Lower leg skin (tissue), 4 donors: ENCODE measurements at regions of chr3 and their contacts with region 1.

Region 1: GRCh38 chr3:116135457-116136085 is 309.7 kb downstream of the LSAMP start:
- DNase-seq: no peak
- H3K4me3 ChIP-seq: no peak overlapping the region
- CTCF ChIP-seq: no peak
- POLR2A ChIP-seq: no peak

Region 2: DNA sequence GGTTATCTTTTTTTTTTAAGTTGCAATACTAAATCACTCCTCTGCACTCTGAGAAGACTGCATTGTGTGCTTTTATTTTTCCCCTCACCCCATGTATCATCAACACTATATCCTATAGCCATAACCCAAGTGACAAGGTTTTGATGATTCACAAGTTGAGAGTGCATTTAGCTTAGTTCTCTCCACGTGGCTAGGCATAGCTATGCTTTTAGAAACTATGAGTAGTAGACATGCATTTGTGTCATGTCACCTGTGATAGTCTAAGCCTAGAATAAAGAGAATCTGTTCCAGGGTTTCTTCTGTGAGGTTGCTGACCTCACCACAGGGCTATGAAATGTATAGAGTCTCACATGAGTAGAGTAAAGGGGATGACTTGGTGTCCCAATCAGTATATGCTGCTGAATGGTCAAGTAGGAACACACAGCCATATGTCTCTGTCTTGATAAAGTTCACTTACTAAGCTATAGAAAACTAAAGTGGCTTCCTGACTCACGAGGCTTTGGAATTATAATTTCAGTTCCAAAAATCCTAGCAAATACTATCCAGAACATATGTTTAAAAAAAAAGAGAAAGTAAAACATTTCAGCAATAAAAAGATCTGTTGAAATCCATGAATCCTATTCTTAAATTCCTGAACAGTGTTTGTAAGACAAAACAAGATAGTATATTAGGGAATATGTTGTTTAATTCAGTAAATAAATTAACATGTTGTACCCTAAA is 103.4 kb after region 1 on chr3:
- intact Hi-C with region 1: no loop called
- DNase-seq: no peak
- H3K4me3 ChIP-seq: no peak overlapping the region
- CTCF ChIP-seq: no peak
- POLR2A ChIP-seq: no peak

Region 3: GRCh38 chr3:116749388-116749787 is 613.8 kb after region 1 on chr3:
- intact Hi-C with region 1: no loop called
- DNase-seq: no peak
- H3K4me3 ChIP-seq: no peak overlapping the region
- CTCF ChIP-seq: no peak
- POLR2A ChIP-seq: no peak

Region 4: DNA sequence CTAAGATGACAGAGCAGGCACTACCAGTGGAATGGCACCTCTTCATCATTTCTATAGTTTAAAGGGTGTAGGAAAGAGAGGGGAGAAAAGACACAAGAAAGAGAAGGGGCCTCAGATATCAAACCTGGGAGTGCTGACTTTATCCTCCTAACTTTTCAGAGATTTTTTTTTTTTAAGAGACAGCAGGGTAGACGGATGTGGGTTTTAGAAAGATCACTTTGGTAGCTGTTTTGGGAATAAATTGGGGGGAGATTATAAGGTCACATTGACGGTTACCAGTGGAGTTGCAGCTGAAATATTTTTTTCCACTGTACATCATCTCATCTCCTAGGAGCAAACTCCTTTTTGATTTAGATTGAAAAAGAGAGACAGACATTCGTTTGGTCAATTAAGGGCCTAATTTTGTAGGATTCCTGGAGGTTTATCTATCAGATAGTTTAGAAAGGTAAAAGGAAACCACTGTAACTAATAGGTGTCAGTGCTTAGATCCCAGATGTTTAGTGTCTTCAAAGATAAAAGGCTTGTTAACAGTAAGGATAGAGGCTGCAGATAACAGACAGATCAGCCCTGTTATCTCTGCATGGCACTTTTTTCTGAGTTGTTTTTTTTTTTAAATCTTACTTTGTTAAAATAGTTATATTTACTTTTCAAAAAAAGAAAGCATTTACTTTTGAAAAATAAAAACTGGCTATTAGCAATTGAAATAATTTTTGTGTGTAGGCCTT is 1842.1 kb after region 1 on chr3:
- intact Hi-C with region 1: loop called (anchors 5 kb)
- DNase-seq: no peak
- H3K4me3 ChIP-seq: no peak overlapping the region
- CTCF ChIP-seq: no peak
- POLR2A ChIP-seq: no peak